ENCODE measurements at regions of chr10 and their contacts with region 1.

Region 1: DNA sequence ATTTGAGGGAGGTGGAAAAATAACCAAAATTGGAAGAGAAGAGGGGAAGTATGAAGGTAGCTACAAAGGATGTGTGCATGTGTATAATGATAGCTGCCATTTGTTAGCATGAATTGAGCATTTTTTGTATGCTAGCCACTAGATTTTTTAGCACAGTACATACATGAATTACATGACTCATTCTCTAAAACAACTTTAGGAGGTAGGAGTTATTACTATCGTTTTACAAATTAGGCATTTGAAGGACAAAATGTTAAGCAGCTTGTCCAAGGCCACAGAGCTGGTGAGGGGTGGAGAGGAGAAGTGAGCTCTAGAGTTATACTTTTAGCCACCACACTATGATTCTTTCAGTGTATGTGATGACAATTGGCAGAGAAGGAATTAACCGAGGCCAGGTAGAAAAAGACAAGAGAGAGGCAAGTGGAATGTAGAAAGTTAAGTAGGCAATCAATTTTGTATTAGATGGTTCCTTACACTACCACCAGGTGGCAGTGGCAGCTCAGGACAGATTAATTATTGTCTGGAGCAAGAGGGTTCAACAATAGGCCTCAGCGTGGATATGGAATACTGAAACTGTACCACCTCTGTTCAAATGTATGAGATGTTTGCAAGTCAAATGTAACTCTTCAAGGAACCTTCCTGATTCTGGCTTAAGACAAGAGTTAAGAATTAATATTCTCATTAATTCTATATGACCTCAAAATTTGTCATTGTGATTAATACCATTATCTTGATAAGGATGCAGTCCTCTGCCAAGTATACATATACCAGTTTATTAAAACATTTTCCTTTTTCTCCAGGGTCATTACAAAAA is 128.0 kb downstream of the MBL2 start:
- DNase-seq: no peak
- H3K4me3 ChIP-seq: no peak overlapping the region
- H3K27ac ChIP-seq: no peak overlapping the region
- H3K27me3 ChIP-seq: no peaks in the 10 kb centered on the region
- CTCF ChIP-seq: peak; percentile 80

Region 2: DNA sequence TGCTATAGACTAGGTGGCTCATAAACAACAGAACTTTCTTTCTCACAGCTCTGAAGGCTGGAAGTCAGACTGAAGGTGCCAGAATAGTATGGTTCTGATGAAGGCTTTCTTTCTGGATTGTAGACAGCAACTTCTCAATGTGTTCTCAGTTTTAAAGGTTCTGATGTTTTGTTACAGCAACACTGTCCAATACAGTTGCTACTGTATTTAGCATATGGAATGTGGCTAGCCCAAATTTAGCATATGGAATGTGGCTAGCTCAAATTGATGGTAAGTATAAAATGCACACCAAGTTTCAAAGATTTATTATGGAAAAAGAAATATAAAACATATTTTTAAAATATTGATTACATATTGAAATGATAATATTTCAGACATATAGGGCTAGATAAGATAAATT is 17.3 kb before region 1 on chr10:
- CTCF ChIA-PET with region 1: interaction called, 23 read pairs
- POLR2A ChIA-PET with region 1: no interaction called
- DNase-seq: no peak
- H3K4me3 ChIP-seq: no peak overlapping the region
- H3K27ac ChIP-seq: no peak overlapping the region
- H3K27me3 ChIP-seq: no peaks in the 10 kb centered on the region
- CTCF ChIP-seq: no peak

Region 3: GRCh38 chr10:52729271-52730104 is 84.9 kb after region 1 on chr10:
- CTCF ChIA-PET with region 1: interaction called, 76 read pairs
- POLR2A ChIA-PET with region 1: no interaction called
- DNase-seq: no peak
- H3K4me3 ChIP-seq: no peak overlapping the region
- H3K27ac ChIP-seq: no peak overlapping the region
- H3K27me3 ChIP-seq: no peaks in the 10 kb centered on the region
- CTCF ChIP-seq: peak; percentile 56

Region 4: DNA sequence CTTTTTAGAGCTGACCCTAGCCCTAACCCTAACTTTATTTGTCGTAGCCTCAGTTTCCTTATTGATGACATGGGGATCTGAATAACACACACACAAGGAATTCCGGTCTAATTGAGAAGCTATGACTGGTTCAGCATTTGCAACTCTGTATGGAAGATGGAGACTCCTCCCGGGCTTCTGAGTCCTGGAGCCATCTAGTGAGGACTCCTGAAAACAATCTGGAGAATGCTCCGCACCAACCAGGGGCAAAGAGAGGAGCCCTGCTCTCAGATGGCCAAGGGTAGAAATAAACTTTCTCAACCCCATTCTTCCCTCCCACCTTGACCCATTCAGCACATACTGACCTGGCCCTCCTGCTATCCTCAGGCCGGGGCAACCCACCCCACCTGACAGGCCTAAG is 101.6 kb after region 1 on chr10:
- CTCF ChIA-PET with region 1: interaction called, 50 read pairs
- POLR2A ChIA-PET with region 1: no interaction called
- DNase-seq: no peak
- H3K4me3 ChIP-seq: no peak overlapping the region
- H3K27ac ChIP-seq: no peak overlapping the region
- H3K27me3 ChIP-seq: peaks cover 2% of the 10 kb centered on the region
- CTCF ChIP-seq: peak; percentile 62